ENCODE measurements at regions of chr15 and their contacts with region 1.

Region 1: GRCh38 chr15:28935326-28935725 is 49.6 kb downstream of the APBA2 start:
- DNase-seq: peak in 1 of 2 experiments; percentile 83
- H3K4me3 ChIP-seq: no peak overlapping the region
- H3K27ac ChIP-seq: no peak overlapping the region
- H3K4me1 ChIP-seq: peaks cover 0 to 9% (median 4%) of the 10 kb centered on the region in 4 experiments; a peak in 4 of 7 replicates
- H3K27me3 ChIP-seq: no peaks in the 10 kb centered on the region
- CTCF ChIP-seq: peak; percentile 83 to 87 (median 86)
- EP300 ChIP-seq: no peak
- POLR2A ChIP-seq: no peak
- RAD21 ChIP-seq: peak; percentile 49 to 65

Region 2: DNA sequence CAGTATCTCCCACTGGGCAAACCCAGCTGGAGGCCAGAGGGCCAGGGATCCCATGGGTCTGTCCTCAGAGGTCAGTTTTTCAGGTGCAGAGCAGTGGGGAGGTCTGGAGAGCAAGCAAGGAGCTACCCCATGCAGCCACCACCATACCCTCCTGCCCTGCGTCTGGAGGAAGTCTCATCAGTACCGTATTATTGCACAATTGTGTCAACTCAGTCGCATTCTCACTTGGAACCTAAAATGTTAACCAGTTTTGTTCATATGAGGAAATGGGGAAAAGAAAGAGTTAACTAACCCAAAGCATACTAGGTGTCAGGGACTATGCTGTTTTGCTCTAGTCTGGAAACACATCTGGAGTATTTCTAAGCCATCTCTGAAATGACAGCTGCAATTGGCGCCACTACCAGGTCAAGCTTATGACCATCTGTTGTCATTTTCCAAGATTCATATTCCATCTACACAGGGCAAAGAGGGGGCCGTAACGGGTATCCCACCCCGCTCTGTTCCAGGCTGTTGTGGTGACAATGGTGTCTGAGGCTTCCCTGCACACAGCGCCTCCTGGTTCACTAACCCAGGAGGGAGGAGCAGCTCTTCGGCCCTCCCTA is 66.5 kb before region 1 on chr15:
- CTCF ChIA-PET with region 1: no interaction called
- POLR2A ChIA-PET with region 1: no interaction called
- DNase-seq: no peak
- H3K4me3 ChIP-seq: no peak overlapping the region
- H3K27ac ChIP-seq: no peak overlapping the region; the same call in 1 of the 2 replicates
- H3K4me1 ChIP-seq: no peaks in the 10 kb centered on the region
- H3K27me3 ChIP-seq: 0 out of 7 replicates have a peak, but pooled peaks cover 0 to 3% (median 0%) of the 10 kb centered on the region in 4 experiments
- CTCF ChIP-seq: no peak
- EP300 ChIP-seq: no peak
- POLR2A ChIP-seq: no peak
- RAD21 ChIP-seq: no peak

Region 3: GRCh38 chr15:28901987-28902745 is 33.2 kb before region 1 on chr15:
- CTCF ChIA-PET with region 1: interaction called, 12 read pairs
- POLR2A ChIA-PET with region 1: no interaction called
- DNase-seq: no peak
- H3K4me3 ChIP-seq: no peak overlapping the region
- H3K27ac ChIP-seq: no peak overlapping the region
- H3K4me1 ChIP-seq: no peaks in the 10 kb centered on the region; a peak in 2 of 7 replicates
- H3K27me3 ChIP-seq: no peaks in the 10 kb centered on the region
- CTCF ChIP-seq: peak; percentile 56 to 80 (median 69)
- EP300 ChIP-seq: no peak
- POLR2A ChIP-seq: no peak
- RAD21 ChIP-seq: peak; percentile 17 to 45; a peak in 2 of 4 replicates

Region 4: GRCh38 chr15:28913171-28913765 is 22.1 kb before region 1 on chr15:
- CTCF ChIA-PET with region 1: interaction called, 78 read pairs
- POLR2A ChIA-PET with region 1: no interaction called
- DNase-seq: no peak
- H3K4me3 ChIP-seq: no peak overlapping the region
- H3K27ac ChIP-seq: no peak overlapping the region
- H3K4me1 ChIP-seq: peaks cover 8 to 23% (median 13%) of the 10 kb centered on the region in 4 experiments
- H3K27me3 ChIP-seq: no peaks in the 10 kb centered on the region
- CTCF ChIP-seq: peak in 2 of 3 experiments; percentile 25 to 32; a peak in 2 of 4 replicates
- EP300 ChIP-seq: no peak
- POLR2A ChIP-seq: no peak
- RAD21 ChIP-seq: peak in 1 of 2 experiments; percentile 35; a peak in 2 of 4 replicates

Region 5: GRCh38 chr15:28921919-28922706 is 13.2 kb before region 1 on chr15:
- CTCF ChIA-PET with region 1: interaction called, 78 read pairs
- POLR2A ChIA-PET with region 1: interaction called, 4 read pairs
- DNase-seq: no peak
- H3K4me3 ChIP-seq: no peak overlapping the region
- H3K27ac ChIP-seq: no peak overlapping the region
- H3K4me1 ChIP-seq: peaks cover 0 to 12% (median 7%) of the 10 kb centered on the region in 4 experiments; a peak in 5 of 7 replicates
- H3K27me3 ChIP-seq: no peaks in the 10 kb centered on the region
- CTCF ChIP-seq: peak; percentile 85 to 89 (median 87)
- EP300 ChIP-seq: no peak
- POLR2A ChIP-seq: no peak
- RAD21 ChIP-seq: peak; percentile 80 to 83

Region 6: GRCh38 chr15:28945626-28946230 is 10.4 kb after region 1 on chr15:
- CTCF ChIA-PET with region 1: interaction called, 15 read pairs
- POLR2A ChIA-PET with region 1: interaction called, 4 read pairs
- DNase-seq: no peak
- H3K4me3 ChIP-seq: no peak overlapping the region
- H3K27ac ChIP-seq: no peak overlapping the region
- H3K4me1 ChIP-seq: no peaks in the 10 kb centered on the region; a peak in 1 of 7 replicates
- H3K27me3 ChIP-seq: no peaks in the 10 kb centered on the region; a peak in 2 of 7 replicates
- CTCF ChIP-seq: no peak
- EP300 ChIP-seq: no peak
- POLR2A ChIP-seq: no peak
- RAD21 ChIP-seq: no peak

Region 7: GRCh38 chr15:28960979-28961378 is 25.7 kb after region 1 on chr15:
- CTCF ChIA-PET with region 1: no interaction called
- POLR2A ChIA-PET with region 1: no interaction called
- DNase-seq: no peak
- H3K4me3 ChIP-seq: no peak overlapping the region
- H3K27ac ChIP-seq: no peak overlapping the region
- H3K4me1 ChIP-seq: peaks cover 0 to 2% (median 0%) of the 10 kb centered on the region in 4 experiments; a peak in 1 of 7 replicates
- H3K27me3 ChIP-seq: no peaks in the 10 kb centered on the region
- CTCF ChIP-seq: no peak
- EP300 ChIP-seq: no peak
- POLR2A ChIP-seq: no peak
- RAD21 ChIP-seq: no peak

Region 8: GRCh38 chr15:28984421-28985315 is 49.3 kb after region 1 on chr15:
- CTCF ChIA-PET with region 1: interaction called, 13 read pairs
- POLR2A ChIA-PET with region 1: no interaction called
- DNase-seq: no peak
- H3K4me3 ChIP-seq: no peak overlapping the region
- H3K27ac ChIP-seq: no peak overlapping the region; the same call in 1 of the 2 replicates
- H3K4me1 ChIP-seq: peaks cover 2 to 6% (median 5%) of the 10 kb centered on the region in 4 experiments; a peak in 6 of 7 replicates
- H3K27me3 ChIP-seq: no peaks in the 10 kb centered on the region; a peak in 1 of 7 replicates
- CTCF ChIP-seq: no peak
- EP300 ChIP-seq: no peak
- POLR2A ChIP-seq: no peak
- RAD21 ChIP-seq: no peak

Measured in H1 (cell line).